ENCODE measurements at regions of chr9 and their contacts with region 1.

Region 1: DNA sequence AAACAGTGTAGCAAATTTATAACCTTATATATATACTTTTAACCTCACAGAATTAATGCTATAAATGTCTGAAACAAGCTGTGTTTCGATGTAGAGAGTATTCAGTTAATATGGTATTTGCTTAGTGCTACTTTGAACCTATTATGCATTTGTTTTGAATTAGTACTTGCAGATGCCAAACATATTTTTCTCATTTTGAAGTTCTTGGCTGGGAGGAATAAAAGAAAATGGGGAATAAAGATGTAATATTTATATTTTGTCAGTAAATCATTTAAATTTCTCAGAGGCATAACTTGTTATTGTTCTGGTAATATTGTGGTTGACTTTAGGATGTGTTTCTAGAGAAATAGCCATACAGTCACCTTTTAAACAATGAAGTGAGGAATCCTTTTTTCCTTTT is 175.9 kb upstream of the IZUMO3 start:
- DNase-seq: no peak
- ATAC-seq: no peak
- H3K4me3 ChIP-seq: no peak overlapping the region
- H3K27ac ChIP-seq: no peak overlapping the region
- H3K4me1 ChIP-seq: no peaks in the 10 kb centered on the region
- H3K27me3 ChIP-seq: no peaks in the 10 kb centered on the region
- CTCF ChIP-seq: no peak
- EP300 ChIP-seq: no peak
- POLR2A ChIP-seq: no peak
- RAD21 ChIP-seq: no peak

Region 2: GRCh38 chr9:24708814-24709213 is 12.8 kb before region 1 on chr9:
- CTCF ChIA-PET with region 1: no interaction called
- POLR2A ChIA-PET with region 1: no interaction called
- in situ Hi-C with region 1: no loop called
- intact Hi-C with region 1: no loop called
- DNase-seq: no peak
- ATAC-seq: no peak
- H3K4me3 ChIP-seq: no peak overlapping the region
- H3K27ac ChIP-seq: no peak overlapping the region
- H3K4me1 ChIP-seq: no peaks in the 10 kb centered on the region
- H3K27me3 ChIP-seq: no peaks in the 10 kb centered on the region
- CTCF ChIP-seq: no peak
- EP300 ChIP-seq: no peak
- POLR2A ChIP-seq: no peak
- RAD21 ChIP-seq: no peak

Region 3: GRCh38 chr9:24801344-24801743 is 79.7 kb after region 1 on chr9:
- CTCF ChIA-PET with region 1: no interaction called
- POLR2A ChIA-PET with region 1: no interaction called
- in situ Hi-C with region 1: loop called (anchors 25 kb)
- intact Hi-C with region 1: no loop called
- DNase-seq: no peak
- ATAC-seq: no peak
- H3K4me3 ChIP-seq: no peak overlapping the region
- H3K27ac ChIP-seq: no peak overlapping the region
- H3K4me1 ChIP-seq: no peaks in the 10 kb centered on the region
- H3K27me3 ChIP-seq: no peaks in the 10 kb centered on the region
- CTCF ChIP-seq: no peak
- EP300 ChIP-seq: no peak
- POLR2A ChIP-seq: no peak
- RAD21 ChIP-seq: no peak